ENCODE measurements at regions of chr14 and their contacts with region 1.

Region 1: GRCh38 chr14:69611201-69612011 is at the start of gene SUSD6:
- DNase-seq: peak; percentile 91
- H3K4me3 Mint-ChIP-seq: peak within 1 kb of the TSS; percentile 96
- H3K27ac Mint-ChIP-seq: peak within 1 kb of the TSS; percentile 97
- H3K4me1 Mint-ChIP-seq: peaks cover 57% of the 10 kb centered on the region
- H3K27me3 Mint-ChIP-seq: no peaks in the 10 kb centered on the region
- total RNA-seq, gene SUSD6: 63.4 to 65.2 TPM

Region 2: GRCh38 chr14:69625299-69626131 is 14.1 kb after region 1 on chr14:
- CTCF ChIA-PET with region 1: interaction called, 14 read pairs
- POLR2A ChIA-PET with region 1: interaction called, 118 read pairs
- DNase-seq: peak; percentile 87
- H3K4me3 Mint-ChIP-seq: peak overlapping the region; percentile 56
- H3K27ac Mint-ChIP-seq: peak overlapping the region; percentile 97
- H3K4me1 Mint-ChIP-seq: peaks cover 91% of the 10 kb centered on the region
- H3K27me3 Mint-ChIP-seq: no peaks in the 10 kb centered on the region

Region 3: DNA sequence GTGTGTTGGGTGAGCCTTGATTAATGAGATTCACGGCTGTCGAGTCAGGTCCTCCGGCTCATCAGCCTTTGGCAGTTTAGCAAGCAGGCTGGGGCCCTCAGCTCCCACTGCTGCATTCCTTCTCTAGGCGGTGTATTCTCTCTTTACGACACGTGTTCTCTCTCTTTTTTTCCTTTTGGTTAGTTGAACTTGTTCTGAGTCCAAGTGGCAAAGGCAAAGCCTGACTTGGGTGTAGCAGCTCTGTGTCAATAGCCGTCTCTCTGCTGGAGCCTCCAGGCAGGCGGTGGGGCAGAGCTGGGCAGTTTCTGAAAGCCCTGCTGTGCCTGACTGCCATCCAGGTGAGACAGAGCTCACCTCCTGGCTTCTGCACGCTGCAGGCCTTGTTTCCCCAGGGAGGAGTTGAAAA is 46.5 kb after region 1 on chr14:
- CTCF ChIA-PET with region 1: no interaction called
- POLR2A ChIA-PET with region 1: interaction called, 15 read pairs
- DNase-seq: no peak
- H3K4me3 Mint-ChIP-seq: peak overlapping the region; percentile 26
- H3K27ac Mint-ChIP-seq: peak overlapping the region; percentile 61
- H3K4me1 Mint-ChIP-seq: peaks cover 93% of the 10 kb centered on the region
- H3K27me3 Mint-ChIP-seq: no peaks in the 10 kb centered on the region

Region 4: GRCh38 chr14:69673578-69674305 is 62.3 kb after region 1 on chr14:
- CTCF ChIA-PET with region 1: interaction called, 5 read pairs
- POLR2A ChIA-PET with region 1: interaction called, 32 read pairs
- DNase-seq: no peak
- H3K4me3 Mint-ChIP-seq: peak overlapping the region; percentile 31
- H3K27ac Mint-ChIP-seq: peak overlapping the region; percentile 95
- H3K4me1 Mint-ChIP-seq: peaks cover 89% of the 10 kb centered on the region
- H3K27me3 Mint-ChIP-seq: no peaks in the 10 kb centered on the region

Region 5: DNA sequence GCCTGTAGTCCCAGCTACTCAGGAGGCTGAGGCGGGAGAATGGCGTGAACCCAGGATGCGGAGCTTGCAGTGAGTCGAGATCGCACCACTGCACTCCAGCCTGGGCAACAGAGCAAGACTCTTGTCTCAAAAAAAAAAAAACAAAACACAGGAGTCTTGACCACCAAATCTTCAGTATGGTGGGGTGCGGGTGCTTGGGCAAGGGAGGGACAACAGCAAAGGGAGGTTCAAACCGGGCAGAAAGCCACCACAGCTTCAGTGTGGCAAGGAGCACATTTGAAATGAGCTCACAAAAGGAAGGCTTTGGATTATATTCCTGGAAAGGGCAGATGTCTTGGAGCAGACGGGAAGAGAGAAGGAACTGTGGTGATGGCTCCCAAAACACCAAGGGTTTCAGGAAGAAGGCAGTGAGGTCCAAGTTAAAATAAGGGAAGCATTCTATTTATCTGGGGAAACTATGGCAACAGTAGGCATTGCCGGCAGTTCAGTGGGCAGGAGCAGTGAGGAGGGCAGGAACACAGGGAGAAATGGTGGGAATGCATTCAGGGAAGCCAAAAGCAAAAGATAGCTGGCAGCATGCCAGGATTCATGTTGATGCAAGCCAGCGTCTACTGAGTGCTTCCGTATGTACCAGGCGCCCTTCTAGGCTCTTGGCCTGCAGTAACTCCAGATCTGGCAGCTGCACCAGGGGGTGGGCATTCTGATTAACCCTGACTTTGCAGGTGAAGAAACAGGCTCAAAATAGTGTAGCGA is 104.5 kb after region 1 on chr14:
- CTCF ChIA-PET with region 1: interaction called, 13 read pairs
- POLR2A ChIA-PET with region 1: interaction called, 31 read pairs
- DNase-seq: no peak
- H3K4me3 Mint-ChIP-seq: peak overlapping the region; percentile 22
- H3K27ac Mint-ChIP-seq: peak overlapping the region; percentile 82
- H3K4me1 Mint-ChIP-seq: peaks cover 76% of the 10 kb centered on the region
- H3K27me3 Mint-ChIP-seq: no peaks in the 10 kb centered on the region

Region 6: GRCh38 chr14:69766984-69767368 is 155.6 kb after region 1 on chr14 and contains the start of gene SRSF5:
- CTCF ChIA-PET with region 1: interaction called, 3 read pairs
- POLR2A ChIA-PET with region 1: interaction called, 33 read pairs
- DNase-seq: peak; percentile 95
- H3K4me3 Mint-ChIP-seq: peak within 1 kb of the TSS; percentile 93
- H3K27ac Mint-ChIP-seq: peak within 1 kb of the TSS; percentile 100
- H3K4me1 Mint-ChIP-seq: peaks cover 62% of the 10 kb centered on the region
- H3K27me3 Mint-ChIP-seq: no peaks in the 10 kb centered on the region
- total RNA-seq, gene SRSF5: 368 to 376 TPM

Region 7: DNA sequence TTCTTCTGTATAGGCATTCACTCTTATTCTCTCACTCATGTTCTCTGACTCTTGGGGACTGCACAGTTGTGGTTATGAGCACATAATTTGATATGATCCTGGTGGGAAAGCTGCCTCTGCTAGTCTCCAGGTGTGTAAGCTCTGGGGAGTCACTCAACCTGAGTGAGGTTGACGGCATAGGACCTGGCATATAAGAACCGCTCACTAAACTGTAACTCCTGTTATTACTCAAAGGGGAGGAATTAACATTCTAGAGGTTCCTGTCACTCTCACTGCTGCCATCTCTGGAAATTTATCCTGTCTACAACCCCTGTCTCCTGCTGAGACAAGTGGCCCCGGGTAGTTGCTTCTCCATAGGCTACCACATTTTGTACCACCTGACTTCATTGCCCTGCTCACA is 169.5 kb after region 1 on chr14:
- CTCF ChIA-PET with region 1: no interaction called
- POLR2A ChIA-PET with region 1: no interaction called
- DNase-seq: no peak
- H3K4me3 Mint-ChIP-seq: no peak overlapping the region
- H3K27ac Mint-ChIP-seq: no peak overlapping the region
- H3K4me1 Mint-ChIP-seq: peaks cover 22% of the 10 kb centered on the region
- H3K27me3 Mint-ChIP-seq: no peaks in the 10 kb centered on the region